Tibial artery (tissue), 4 donors: ENCODE measurements at regions of chr16 and their contacts with region 1.

Region 1: GRCh38 chr16:81403616-81404373 is 40.8 kb upstream of the CMIP start:
- DNase-seq: peak; percentile 78 to 87
- H3K4me3 ChIP-seq: peak overlapping the region in 1 of 2 donors; percentile 19
- H3K27ac ChIP-seq: no peak overlapping the region
- H3K4me1 ChIP-seq: peaks cover 0 to 8% (median 6%) of the 10 kb centered on the region in 4 donors
- H3K27me3 ChIP-seq: peaks cover 0 to 34% of the 10 kb centered on the region in 2 donors
- CTCF ChIP-seq: peak; percentile 90 to 94

Region 2: GRCh38 chr16:81730090-81731051 is 326.6 kb after region 1 on chr16:
- intact Hi-C with region 1: loop called (anchors 2 kb)
- DNase-seq: peak; percentile 65 to 83
- H3K4me3 ChIP-seq: peak overlapping the region; percentile 26 to 49
- H3K27ac ChIP-seq: no peak overlapping the region
- H3K4me1 ChIP-seq: peaks cover 0 to 11% (median 10%) of the 10 kb centered on the region in 4 donors
- H3K27me3 ChIP-seq: peaks cover 4 to 6% of the 10 kb centered on the region in 2 donors
- CTCF ChIP-seq: peak; percentile 30 to 42

Region 3: GRCh38 chr16:81737885-81738786 is 334.3 kb after region 1 on chr16:
- intact Hi-C with region 1: loop called (anchors 5 kb)
- DNase-seq: peak; percentile 68 to 82
- H3K4me3 ChIP-seq: peak overlapping the region in 1 of 2 donors; percentile 5
- H3K27ac ChIP-seq: no peak overlapping the region
- H3K4me1 ChIP-seq: peaks cover 0 to 8% (median 3%) of the 10 kb centered on the region in 4 donors
- H3K27me3 ChIP-seq: peaks cover 0 to 18% of the 10 kb centered on the region in 2 donors
- CTCF ChIP-seq: peak; percentile 66 to 73